T-cell (primary cell): ENCODE measurements at regions of chr3 and their contacts with region 1.

Region 1: GRCh38 chr3:129016356-129016719 is 15.2 kb downstream of the EFCC1 start:
- DNase-seq: peak; percentile 42 to 85 (median 62)
- ATAC-seq: peak; percentile 80 to 91 (median 84)
- H3K4me3 ChIP-seq: peak overlapping the region in 1 of 2 donors; percentile 32
- H3K4me3 Mint-ChIP-seq: peak overlapping the region; percentile 50 to 81 (median 72)
- H3K27ac ChIP-seq: peak overlapping the region; percentile 84
- H3K27ac Mint-ChIP-seq: peak overlapping the region; percentile 95 to 99
- H3K4me1 ChIP-seq: peaks cover 26 to 43% of the 10 kb centered on the region in 2 experiments
- H3K4me1 Mint-ChIP-seq: peaks cover 46 to 61% (median 47%) of the 10 kb centered on the region in 3 donors
- H3K27me3 ChIP-seq: no peaks in the 10 kb centered on the region
- H3K27me3 Mint-ChIP-seq: no peaks in the 10 kb centered on the region

Region 2: DNA sequence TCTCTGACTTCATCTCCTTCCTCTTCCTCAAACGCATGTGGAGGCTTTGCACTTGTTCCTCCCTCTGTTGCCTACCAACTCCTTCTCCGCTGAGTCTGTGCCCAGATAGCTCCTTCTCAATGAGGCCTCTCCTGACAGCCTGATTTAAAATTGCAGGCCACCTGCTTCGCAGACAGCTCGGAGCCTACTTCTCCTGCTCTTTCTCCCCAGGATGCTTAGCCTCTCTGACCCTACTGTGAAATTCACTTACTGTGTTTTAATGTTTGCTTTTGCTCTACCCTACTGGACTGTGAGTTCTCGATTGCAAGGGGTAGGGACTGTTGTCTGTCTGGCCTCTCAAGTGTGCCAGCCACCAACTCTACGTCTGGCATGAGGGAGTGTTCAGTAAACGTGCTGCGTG is 779.7 kb before region 1 on chr3:
- CTCF ChIA-PET with region 1: no interaction called
- POLR2A ChIA-PET with region 1: no interaction called
- DNase-seq: no peak
- ATAC-seq: no peak
- H3K4me3 ChIP-seq: no peak overlapping the region
- H3K4me3 Mint-ChIP-seq: no peak overlapping the region
- H3K27ac ChIP-seq: no peak overlapping the region
- H3K27ac Mint-ChIP-seq: peak overlapping the region; percentile 12 to 61
- H3K4me1 ChIP-seq: peaks cover 0 to 10% of the 10 kb centered on the region in 2 experiments
- H3K4me1 Mint-ChIP-seq: peaks cover 36 to 40% (median 40%) of the 10 kb centered on the region in 3 donors
- H3K27me3 ChIP-seq: no peaks in the 10 kb centered on the region
- H3K27me3 Mint-ChIP-seq: no peaks in the 10 kb centered on the region

Region 3: DNA sequence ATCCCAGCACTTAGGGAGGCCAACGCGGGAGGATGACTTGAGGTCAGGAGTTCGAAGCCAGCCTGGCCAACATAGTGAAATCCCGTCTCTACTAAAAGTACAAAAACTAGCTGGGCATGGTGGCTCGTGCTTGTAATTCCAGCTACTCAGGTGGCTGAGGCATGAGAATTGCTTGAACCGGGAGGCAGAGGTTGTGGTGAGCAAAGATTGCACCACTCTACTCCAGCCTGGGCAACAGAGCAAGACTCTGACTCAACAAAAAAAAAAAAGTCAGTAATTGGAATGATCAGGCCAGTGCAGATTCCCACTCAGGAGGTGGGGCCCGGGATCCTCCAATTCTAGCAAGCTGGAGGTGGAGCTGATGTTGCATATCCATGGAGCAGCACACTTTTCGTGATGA is 28.1 kb before region 1 on chr3:
- CTCF ChIA-PET with region 1: no interaction called
- POLR2A ChIA-PET with region 1: no interaction called
- DNase-seq: no peak
- ATAC-seq: no peak
- H3K4me3 ChIP-seq: no peak overlapping the region
- H3K4me3 Mint-ChIP-seq: no peak overlapping the region
- H3K27ac ChIP-seq: no peak overlapping the region
- H3K27ac Mint-ChIP-seq: no peak overlapping the region
- H3K4me1 ChIP-seq: peaks cover 0 to 4% of the 10 kb centered on the region in 2 experiments
- H3K4me1 Mint-ChIP-seq: peaks cover under 1 to 6% (median 5%) of the 10 kb centered on the region in 3 donors
- H3K27me3 ChIP-seq: peaks cover 0 to 2% of the 10 kb centered on the region in 2 experiments
- H3K27me3 Mint-ChIP-seq: no peaks in the 10 kb centered on the region

Region 4: DNA sequence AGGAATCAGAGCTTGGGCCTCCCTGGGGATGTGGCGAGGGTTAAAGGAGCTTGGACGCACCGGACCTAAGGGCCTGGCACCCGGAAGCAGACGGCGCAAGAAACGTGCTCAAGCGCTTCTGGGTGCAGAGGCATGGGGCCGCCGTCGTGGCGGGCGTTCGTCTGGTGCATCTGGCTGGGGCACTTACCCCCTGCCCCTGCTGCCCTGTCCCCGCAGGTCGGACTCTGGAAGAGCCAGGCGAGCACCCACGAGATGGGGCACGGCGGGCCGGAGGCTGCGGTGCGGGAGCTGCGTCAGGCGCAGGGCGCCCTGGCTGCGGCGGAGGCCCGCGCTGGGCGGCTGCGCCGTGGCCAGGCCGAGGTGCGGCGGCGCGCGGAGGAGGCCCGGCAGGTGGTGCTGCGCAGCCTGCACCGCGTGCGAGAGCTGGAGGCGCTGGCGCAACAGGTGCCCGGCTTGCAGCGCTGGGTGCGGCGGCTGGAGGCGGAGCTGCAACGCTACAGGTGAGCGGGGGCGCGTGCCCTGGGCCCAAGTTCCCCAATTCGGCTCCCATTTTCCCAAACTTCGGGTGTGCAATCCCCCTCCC is 12.7 kb before region 1 on chr3:
- CTCF ChIA-PET with region 1: interaction called, 18 to 49 read pairs
- POLR2A ChIA-PET with region 1: interaction called in 1 of 2 experiments, 3 read pairs
- DNase-seq: peak in 34 of 35 experiments; percentile 21 to 81 (median 48)
- ATAC-seq: peak; percentile 85 to 90 (median 90)
- H3K4me3 ChIP-seq: peak overlapping the region in 1 of 2 donors; percentile 15
- H3K4me3 Mint-ChIP-seq: peak overlapping the region; percentile 40 to 82 (median 62)
- H3K27ac ChIP-seq: no peak overlapping the region
- H3K27ac Mint-ChIP-seq: no peak overlapping the region
- H3K4me1 ChIP-seq: peaks cover 19 to 50% of the 10 kb centered on the region in 2 experiments
- H3K4me1 Mint-ChIP-seq: peaks cover 47 to 52% (median 48%) of the 10 kb centered on the region in 3 donors
- H3K27me3 ChIP-seq: peaks cover 0 to 45% of the 10 kb centered on the region in 2 experiments
- H3K27me3 Mint-ChIP-seq: peaks cover 14 to 33% of the 10 kb centered on the region in 2 donors

Region 5: DNA sequence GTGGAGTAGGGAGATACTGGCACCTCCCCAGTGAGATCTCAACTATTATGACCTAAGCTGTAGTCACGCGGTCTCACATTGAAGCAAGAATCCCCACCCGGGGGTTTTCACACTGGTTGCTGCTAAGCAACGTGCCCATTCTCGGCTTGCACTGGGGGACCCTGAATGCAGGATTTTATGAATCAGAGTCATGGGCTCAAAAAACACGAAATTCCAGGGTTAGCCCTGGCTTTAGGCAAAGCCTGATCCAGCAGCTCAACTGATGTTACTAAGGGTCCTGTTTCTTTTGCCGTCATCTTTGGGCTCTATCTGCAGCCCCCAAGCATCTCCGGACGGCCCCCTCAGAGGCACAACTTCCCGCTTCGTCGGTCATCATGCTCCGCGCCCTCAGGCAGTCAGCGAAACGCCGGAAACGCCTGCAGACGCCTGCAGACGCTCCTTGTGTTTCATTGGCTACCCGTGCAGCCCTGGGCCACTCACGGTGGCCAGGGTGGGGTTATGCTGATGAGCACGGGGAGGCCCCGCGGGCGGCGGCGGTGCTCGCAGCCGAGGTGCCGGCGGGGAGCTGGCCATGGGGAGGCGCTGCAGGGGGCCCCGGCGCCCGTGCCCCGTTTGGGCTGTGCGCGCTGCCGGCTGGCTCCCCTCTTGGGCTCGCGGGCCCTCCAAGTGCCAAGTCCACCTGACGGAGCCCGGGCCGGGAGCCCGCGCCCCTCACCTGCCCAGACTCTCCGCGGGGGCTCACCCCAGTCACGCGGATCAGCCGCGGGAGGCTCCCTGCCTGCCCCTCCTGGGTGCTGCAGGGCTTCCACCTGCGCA is 10.6 kb after region 1 on chr3:
- CTCF ChIA-PET with region 1: interaction called, 4 to 37 read pairs
- POLR2A ChIA-PET with region 1: interaction called, 3 to 13 read pairs
- DNase-seq: peak; percentile 80 to 96 (median 92)
- ATAC-seq: peak; percentile 97 to 100 (median 100)
- H3K4me3 ChIP-seq: peak overlapping the region; percentile 47 to 65
- H3K4me3 Mint-ChIP-seq: peak overlapping the region; percentile 79 to 80 (median 79)
- H3K27ac ChIP-seq: peak overlapping the region; percentile 82
- H3K27ac Mint-ChIP-seq: peak overlapping the region; percentile 94 to 96
- H3K4me1 ChIP-seq: peaks cover 5 to 30% of the 10 kb centered on the region in 2 experiments
- H3K4me1 Mint-ChIP-seq: peaks cover 20 to 29% (median 24%) of the 10 kb centered on the region in 3 donors
- H3K27me3 ChIP-seq: no peaks in the 10 kb centered on the region
- H3K27me3 Mint-ChIP-seq: no peaks in the 10 kb centered on the region